Activated CD4-positive, alpha-beta T cell treated with anti-CD3 and anti-CD28 coated beads for 36 hours (primary cell): ENCODE measurements at regions of chr9 and their contacts with region 1.

Region 1: GRCh38 chr9:137605121-137606004 is at the start of gene ARRDC1:
- DNase-seq: peak; percentile 97
- ATAC-seq: peak; percentile 92
- H3K4me3 Mint-ChIP-seq: peak within 1 kb of the TSS; percentile 76
- H3K27ac Mint-ChIP-seq: no peak within 1 kb of the TSS
- H3K4me1 Mint-ChIP-seq: peaks cover 24% of the 10 kb centered on the region
- H3K27me3 Mint-ChIP-seq: no peaks in the 10 kb centered on the region
- total RNA-seq, gene ARRDC1: 32.4 to 41.6 TPM

Region 2: GRCh38 chr9:136807281-136808074 is 797.9 kb before region 1 on chr9 and contains the start of gene RABL6:
- CTCF ChIA-PET with region 1: no interaction called
- POLR2A ChIA-PET with region 1: no interaction called
- intact Hi-C with region 1: loop called in 1 of 2 experiments (anchors 1 kb)
- DNase-seq: peak; percentile 86
- ATAC-seq: peak; percentile 88
- H3K4me3 Mint-ChIP-seq: peak within 1 kb of the TSS; percentile 81
- H3K27ac Mint-ChIP-seq: peak within 1 kb of the TSS; percentile 88
- H3K4me1 Mint-ChIP-seq: peaks cover 33% of the 10 kb centered on the region
- H3K27me3 Mint-ChIP-seq: no peaks in the 10 kb centered on the region
- total RNA-seq, gene RABL6: 66.2 to 71.8 TPM

Region 3: DNA sequence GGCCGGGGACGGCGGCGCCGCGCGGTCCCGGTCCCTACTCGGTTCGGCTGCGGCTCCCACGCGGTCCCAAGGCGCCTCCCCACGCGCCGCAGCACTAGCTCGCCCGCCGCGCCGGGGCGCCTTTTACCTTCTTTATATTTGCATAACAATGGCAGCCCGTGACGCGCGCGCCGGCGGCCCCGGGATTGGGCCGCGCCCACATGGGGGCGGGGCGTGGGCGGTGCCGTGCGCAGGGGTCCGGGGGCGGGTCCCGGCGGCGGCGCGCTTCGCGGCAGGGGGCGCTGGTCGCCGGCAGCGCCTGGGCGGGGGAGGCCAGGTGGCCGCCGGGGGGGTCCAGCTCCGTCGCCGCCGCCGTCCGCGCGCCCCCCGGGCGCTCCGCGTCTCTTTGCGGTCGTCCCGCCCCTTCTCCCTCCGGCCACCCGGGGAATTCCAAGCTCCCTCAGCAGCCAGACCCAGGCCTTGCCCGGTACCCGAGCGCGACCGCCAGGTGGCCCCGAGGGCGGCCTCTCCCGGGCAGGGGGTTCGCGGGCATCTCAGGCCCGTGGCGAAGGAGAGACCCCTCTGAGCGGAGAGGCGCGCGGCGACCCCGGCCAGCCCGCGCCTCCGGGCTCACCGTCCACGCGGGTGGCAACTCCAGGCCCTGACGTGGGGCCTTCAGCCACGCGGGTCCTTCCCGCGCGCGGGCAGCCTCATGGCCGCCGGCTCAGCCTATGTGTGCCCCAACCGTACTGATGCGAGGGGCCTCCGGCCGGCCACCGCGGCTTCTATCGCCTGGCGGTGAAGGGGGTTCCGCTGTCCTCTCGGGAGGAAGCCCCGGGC is 303.0 kb before region 1 on chr9 and contains the start of gene NRARP:
- CTCF ChIA-PET with region 1: no interaction called
- POLR2A ChIA-PET with region 1: no interaction called
- intact Hi-C with region 1: loop called in 1 of 2 experiments (anchors 1 kb)
- DNase-seq: peak; percentile 96
- ATAC-seq: peak; percentile 75
- H3K4me3 Mint-ChIP-seq: peak within 1 kb of the TSS; percentile 74
- H3K27ac Mint-ChIP-seq: no peak within 1 kb of the TSS
- H3K4me1 Mint-ChIP-seq: peaks cover 15% of the 10 kb centered on the region
- H3K27me3 Mint-ChIP-seq: peaks cover 10% of the 10 kb centered on the region
- total RNA-seq, gene NRARP: 2.1 TPM

Region 4: DNA sequence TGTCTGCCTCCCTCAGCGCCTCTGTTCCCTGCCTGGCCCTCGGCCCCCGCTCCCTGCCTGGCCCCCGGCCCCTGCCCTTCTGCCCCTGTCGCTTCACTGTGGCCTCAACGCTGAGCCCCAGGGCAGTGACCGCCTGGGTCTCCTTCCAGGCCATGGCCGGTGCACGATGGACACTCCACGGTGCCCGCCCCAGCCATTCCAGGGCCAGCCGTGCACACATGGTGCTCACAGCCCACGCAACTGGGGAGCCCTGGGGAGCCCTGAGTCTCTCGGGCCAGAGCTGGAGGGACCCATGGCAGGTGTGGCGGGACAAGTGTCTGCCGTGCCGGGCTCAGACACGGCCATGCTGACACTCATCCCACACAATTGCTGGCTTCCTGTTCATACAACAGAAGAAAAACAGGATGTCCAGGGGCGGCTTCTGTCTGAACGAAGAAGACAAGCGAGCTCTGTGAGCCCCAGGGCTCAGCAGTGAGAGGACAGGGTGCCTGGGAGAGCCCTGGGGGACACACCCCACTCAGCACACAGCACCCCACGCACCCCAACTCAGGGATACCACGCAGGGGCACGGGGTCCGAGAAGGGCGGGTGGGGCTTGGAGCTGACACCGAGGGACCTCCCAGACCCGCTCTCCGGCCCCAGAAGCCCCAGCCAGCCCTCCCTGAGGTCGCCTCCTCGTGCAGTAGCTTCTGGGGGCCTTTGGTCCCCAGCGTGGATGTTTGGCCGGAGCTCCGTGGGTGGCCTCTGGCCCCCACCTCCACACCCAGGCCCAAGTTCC is 218.1 kb before region 1 on chr9:
- CTCF ChIA-PET with region 1: no interaction called
- POLR2A ChIA-PET with region 1: no interaction called
- intact Hi-C with region 1: no loop called
- DNase-seq: peak; percentile 70
- ATAC-seq: peak; percentile 93
- H3K4me3 Mint-ChIP-seq: no peak overlapping the region
- H3K27ac Mint-ChIP-seq: peak overlapping the region; percentile 78
- H3K4me1 Mint-ChIP-seq: peaks cover 11% of the 10 kb centered on the region
- H3K27me3 Mint-ChIP-seq: no peaks in the 10 kb centered on the region

Region 5: DNA sequence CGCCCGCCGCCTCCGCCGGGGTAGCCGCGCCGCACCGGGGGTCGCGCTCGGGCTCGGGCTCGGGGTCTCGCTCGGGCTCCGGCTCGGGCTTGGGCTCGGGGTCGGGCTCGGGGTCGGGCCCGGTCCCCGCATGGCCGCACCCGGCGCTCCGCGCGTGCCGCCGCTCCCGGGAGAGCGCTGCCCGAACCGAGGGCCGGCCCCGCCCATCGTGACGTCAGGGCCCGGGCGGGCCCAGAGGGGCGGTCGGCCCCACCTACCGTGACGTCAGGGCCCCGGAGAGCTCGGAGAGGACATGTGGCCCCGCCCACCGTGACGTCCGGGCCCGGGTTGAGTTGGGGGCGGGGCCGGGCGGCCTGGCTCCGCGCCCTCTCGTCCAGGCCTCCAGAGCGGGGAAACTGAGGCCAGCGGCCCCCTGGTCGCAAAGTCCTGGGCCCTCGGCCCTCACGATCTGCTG is 146.2 kb before region 1 on chr9 and contains the start of gene NSMF:
- CTCF ChIA-PET with region 1: no interaction called
- POLR2A ChIA-PET with region 1: no interaction called
- intact Hi-C with region 1: loop called in 1 of 2 experiments (anchors 1 kb)
- DNase-seq: peak; percentile 98
- ATAC-seq: peak; percentile 66
- H3K4me3 Mint-ChIP-seq: peak within 1 kb of the TSS; percentile 39
- H3K27ac Mint-ChIP-seq: peak within 1 kb of the TSS; percentile 78
- H3K4me1 Mint-ChIP-seq: peaks cover 33% of the 10 kb centered on the region
- H3K27me3 Mint-ChIP-seq: no peaks in the 10 kb centered on the region
- total RNA-seq, gene NSMF: 63.6 to 65.0 TPM

Region 6: GRCh38 chr9:137578518-137579258 is 26.7 kb before region 1 on chr9 and contains the start of gene DPH7:
- CTCF ChIA-PET with region 1: no interaction called
- POLR2A ChIA-PET with region 1: no interaction called
- intact Hi-C with region 1: loop called in 1 of 2 experiments (anchors 1 kb)
- DNase-seq: peak; percentile 98
- ATAC-seq: peak; percentile 99
- H3K4me3 Mint-ChIP-seq: peak within 1 kb of the TSS; percentile 80
- H3K27ac Mint-ChIP-seq: peak within 1 kb of the TSS; percentile 55
- H3K4me1 Mint-ChIP-seq: peaks cover 28% of the 10 kb centered on the region
- H3K27me3 Mint-ChIP-seq: no peaks in the 10 kb centered on the region
- total RNA-seq, gene DPH7: 23.5 to 29.1 TPM

Region 7: GRCh38 chr9:137618105-137619067 is 13.0 kb after region 1 on chr9 and contains the start of gene EHMT1:
- CTCF ChIA-PET with region 1: no interaction called
- POLR2A ChIA-PET with region 1: interaction called, 5 read pairs
- intact Hi-C with region 1: loop called (anchors 1 kb)
- DNase-seq: peak; percentile 92
- ATAC-seq: peak; percentile 82
- H3K4me3 Mint-ChIP-seq: peak within 1 kb of the TSS; percentile 85
- H3K27ac Mint-ChIP-seq: peak within 1 kb of the TSS; percentile 90
- H3K4me1 Mint-ChIP-seq: peaks cover 37% of the 10 kb centered on the region
- H3K27me3 Mint-ChIP-seq: no peaks in the 10 kb centered on the region
- total RNA-seq, gene EHMT1: 66.6 to 76.7 TPM

Region 8: GRCh38 chr9:137918331-137919094 is 313.1 kb after region 1 on chr9:
- CTCF ChIA-PET with region 1: no interaction called
- POLR2A ChIA-PET with region 1: no interaction called
- intact Hi-C with region 1: no loop called
- DNase-seq: no peak
- ATAC-seq: no peak
- H3K4me3 Mint-ChIP-seq: no peak overlapping the region
- H3K27ac Mint-ChIP-seq: no peak overlapping the region
- H3K4me1 Mint-ChIP-seq: no peaks in the 10 kb centered on the region
- H3K27me3 Mint-ChIP-seq: peaks cover 9% of the 10 kb centered on the region